Tibial artery (tissue), 4 donors: ENCODE measurements at regions of chr22 and their contacts with region 1.

Region 1: GRCh38 chr22:19291580-19292457 is at the start of gene CLTCL1:
- DNase-seq: peak; percentile 59 to 90
- H3K4me3 ChIP-seq: peak within 1 kb of the TSS; percentile 61 to 98
- H3K27ac ChIP-seq: peak within 1 kb of the TSS; percentile 90 to 92
- H3K4me1 ChIP-seq: peaks cover 0 to 31% (median 17%) of the 10 kb centered on the region in 4 donors
- H3K27me3 ChIP-seq: no peaks in the 10 kb centered on the region
- CTCF ChIP-seq: no peak

Region 2: GRCh38 chr22:18044548-18045271 is 1247.1 kb before region 1 on chr22:
- intact Hi-C with region 1: no loop called
- DNase-seq: peak in 1 of 2 donors; percentile 82
- H3K4me3 ChIP-seq: no peak overlapping the region
- H3K27ac ChIP-seq: peak overlapping the region; percentile 82 to 87
- H3K4me1 ChIP-seq: peaks cover 0 to 38% (median 22%) of the 10 kb centered on the region in 4 donors
- H3K27me3 ChIP-seq: no peaks in the 10 kb centered on the region
- CTCF ChIP-seq: no peak

Region 3: GRCh38 chr22:19178656-19179496 is 112.9 kb before region 1 on chr22 and contains the start of gene SLC25A1:
- intact Hi-C with region 1: loop called (anchors 5 kb)
- DNase-seq: peak; percentile 89 to 96
- H3K4me3 ChIP-seq: peak within 1 kb of the TSS; percentile 77 to 78
- H3K27ac ChIP-seq: peak within 1 kb of the TSS; percentile 86 to 89
- H3K4me1 ChIP-seq: peaks cover 6 to 52% (median 36%) of the 10 kb centered on the region in 4 donors
- H3K27me3 ChIP-seq: no peaks in the 10 kb centered on the region
- CTCF ChIP-seq: no peak

Region 4: GRCh38 chr22:19232623-19233022 is 59.2 kb before region 1 on chr22:
- intact Hi-C with region 1: loop called (anchors 10 kb)
- DNase-seq: no peak
- H3K4me3 ChIP-seq: no peak overlapping the region
- H3K27ac ChIP-seq: no peak overlapping the region
- H3K4me1 ChIP-seq: peaks cover 0 to 7% (median 0%) of the 10 kb centered on the region in 4 donors
- H3K27me3 ChIP-seq: no peaks in the 10 kb centered on the region
- CTCF ChIP-seq: no peak

Region 5: GRCh38 chr22:19717691-19718455 is 426.1 kb after region 1 on chr22:
- intact Hi-C with region 1: loop called (anchors 10 kb)
- DNase-seq: peak; percentile 64 to 88
- H3K4me3 ChIP-seq: peak overlapping the region; percentile 68 to 90
- H3K27ac ChIP-seq: peak overlapping the region; percentile 84 to 87
- H3K4me1 ChIP-seq: peaks cover 0 to 46% (median 38%) of the 10 kb centered on the region in 4 donors
- H3K27me3 ChIP-seq: peaks cover 0 to 16% of the 10 kb centered on the region in 2 donors
- CTCF ChIP-seq: peak; percentile 97 to 98